ENCODE measurements at regions of chr2 and their contacts with region 1.

Region 1: DNA sequence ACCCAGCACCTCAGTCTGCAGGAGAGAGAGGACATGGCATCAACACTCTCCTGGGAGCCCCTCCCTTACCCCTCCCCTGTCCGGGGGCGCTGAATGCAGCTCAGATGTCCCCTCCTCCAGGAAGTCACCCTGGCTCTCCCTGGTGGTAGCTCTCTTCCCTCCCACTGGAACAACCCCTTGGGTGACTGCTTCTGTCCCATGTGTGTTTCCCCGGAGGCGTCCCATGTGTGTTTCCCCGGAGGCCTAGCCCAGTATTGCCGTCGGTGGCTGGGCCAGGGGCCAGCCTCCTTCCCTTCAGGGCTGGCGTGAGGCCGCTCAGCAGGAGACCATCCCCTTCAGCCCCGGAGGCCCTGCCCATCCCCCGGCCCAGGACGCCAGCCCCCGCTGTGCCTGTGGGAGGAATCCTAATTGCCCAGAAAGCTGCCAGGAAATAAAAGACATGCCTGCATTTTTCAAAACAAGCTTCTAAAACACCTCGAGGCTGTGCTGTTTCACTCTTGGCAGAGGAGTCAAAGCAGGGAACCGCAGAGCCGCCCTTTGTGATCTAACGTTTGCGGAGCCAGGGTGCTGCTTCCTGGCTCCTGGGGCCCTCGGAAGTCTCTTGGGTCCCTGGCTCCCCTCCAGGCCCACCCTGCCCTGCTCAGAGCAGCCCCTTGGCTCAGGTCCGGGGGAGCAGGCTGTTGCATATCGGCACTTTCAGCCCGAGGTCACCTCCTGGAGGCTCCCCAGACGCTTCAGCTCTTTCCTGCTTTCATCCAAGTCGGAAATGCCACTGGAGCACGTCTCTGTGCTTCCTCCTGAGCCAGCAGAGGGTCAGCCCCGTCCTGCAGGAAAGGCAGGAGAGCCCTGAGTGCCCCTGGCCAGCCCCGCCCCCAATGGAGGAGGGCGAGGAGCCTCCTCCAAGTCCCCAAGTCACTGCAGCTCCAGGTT is 11.4 kb downstream of the SNED1 start:
- DNase-seq: peak; percentile 82

Region 2: GRCh38 chr2:239824046-239824694 is 1185.7 kb before region 1 on chr2:
- intact Hi-C with region 1: no loop called
- DNase-seq: peak; percentile 60

Region 3: DNA sequence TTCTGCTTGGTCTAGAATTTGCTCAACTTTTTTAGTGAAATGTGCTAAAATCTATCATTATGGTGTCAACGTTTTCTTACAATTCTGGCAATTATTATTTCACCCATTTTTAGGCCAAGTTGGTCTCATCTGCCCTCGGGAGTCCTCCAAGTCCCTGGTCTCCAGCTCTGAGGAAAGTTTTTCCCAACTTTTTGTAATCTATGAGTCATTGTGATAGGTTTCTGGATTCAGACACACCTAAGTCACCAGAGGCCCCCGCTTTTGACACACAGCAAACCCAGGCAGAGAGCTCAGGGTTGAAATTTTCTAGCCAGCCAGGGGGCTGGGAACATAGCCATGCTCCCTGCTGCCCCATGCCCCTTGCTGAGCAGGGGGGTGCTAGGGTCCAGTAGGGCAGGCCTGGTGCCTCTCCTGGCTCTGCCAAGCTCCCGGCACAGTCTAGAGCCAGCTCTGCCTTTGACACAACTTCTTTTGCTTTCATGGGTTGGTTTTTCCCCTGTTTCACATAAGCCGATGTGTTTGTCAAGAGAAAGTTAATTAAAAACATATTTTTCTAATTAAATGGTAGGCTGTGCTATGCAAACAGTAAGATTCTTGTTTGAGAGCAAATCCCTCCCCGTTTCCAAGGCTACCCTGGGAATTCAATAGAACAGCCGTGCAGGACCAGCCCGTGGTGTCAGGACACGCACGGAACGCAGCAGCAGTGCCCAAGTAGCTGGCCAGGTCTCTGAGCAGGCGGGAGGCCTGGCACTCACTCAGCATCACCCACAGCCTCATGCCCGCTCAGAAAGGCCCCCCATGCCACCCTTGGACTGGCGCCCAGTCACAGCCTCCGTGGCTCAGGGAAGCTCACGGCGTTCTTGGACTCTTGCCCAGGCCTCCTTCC is 37.0 kb before region 1 on chr2:
- intact Hi-C with region 1: no loop called
- DNase-seq: peak; percentile 75

Region 4: DNA sequence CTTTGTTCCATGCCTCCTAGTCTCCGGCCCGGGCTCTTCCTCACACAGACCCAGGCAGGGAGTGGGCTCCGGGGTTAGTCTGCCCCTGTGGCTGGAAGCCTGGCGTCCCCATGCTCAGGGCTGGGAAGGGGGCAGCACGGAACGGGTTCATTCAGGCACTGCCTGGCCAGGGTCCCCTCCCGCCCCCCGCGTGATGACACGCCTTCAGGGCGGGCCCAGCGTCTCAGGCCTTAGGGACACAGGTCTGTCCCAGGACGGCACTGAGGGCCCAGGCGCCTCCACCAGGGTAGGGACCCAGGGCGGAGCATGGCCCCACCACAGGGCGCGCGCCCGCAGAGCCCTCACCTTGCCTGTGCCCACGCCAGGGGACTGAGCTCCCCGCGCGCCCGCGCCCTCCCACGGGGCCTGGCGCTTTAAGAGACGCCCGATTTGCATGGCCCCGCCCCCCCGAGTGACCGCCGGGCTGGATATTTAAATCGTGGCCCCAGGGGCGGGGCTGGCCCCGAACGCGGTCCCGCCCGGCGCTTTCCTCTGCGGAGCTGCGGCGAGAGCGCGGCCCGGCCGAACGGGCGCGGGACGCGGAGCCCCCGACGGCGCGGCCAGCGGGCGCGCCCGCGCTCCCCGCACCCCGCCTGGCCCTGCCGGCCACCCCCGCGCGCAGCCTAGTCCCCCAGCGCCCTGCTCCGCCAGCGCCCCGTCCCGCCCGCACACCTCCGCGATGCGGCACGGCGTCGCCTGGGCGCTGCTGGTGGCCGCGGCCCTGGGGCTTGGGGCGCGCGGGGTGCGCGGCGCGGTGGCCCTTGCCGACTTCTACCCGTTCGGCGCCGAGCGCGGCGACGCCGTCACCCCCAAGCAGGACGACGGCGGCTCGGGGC is 11.5 kb before region 1 on chr2 and contains the start of gene SNED1:
- intact Hi-C with region 1: no loop called
- DNase-seq: peak; percentile 96
- total RNA-seq, gene SNED1: 39.7 to 62.7 TPM

Region 5: GRCh38 chr2:241108271-241109209 is 98.7 kb after region 1 on chr2:
- intact Hi-C with region 1: loop called in 1 of 2 experiments (anchors 5 kb)
- DNase-seq: no peak